ENCODE measurements at regions of chr17 and their contacts with region 1.

Region 1: DNA sequence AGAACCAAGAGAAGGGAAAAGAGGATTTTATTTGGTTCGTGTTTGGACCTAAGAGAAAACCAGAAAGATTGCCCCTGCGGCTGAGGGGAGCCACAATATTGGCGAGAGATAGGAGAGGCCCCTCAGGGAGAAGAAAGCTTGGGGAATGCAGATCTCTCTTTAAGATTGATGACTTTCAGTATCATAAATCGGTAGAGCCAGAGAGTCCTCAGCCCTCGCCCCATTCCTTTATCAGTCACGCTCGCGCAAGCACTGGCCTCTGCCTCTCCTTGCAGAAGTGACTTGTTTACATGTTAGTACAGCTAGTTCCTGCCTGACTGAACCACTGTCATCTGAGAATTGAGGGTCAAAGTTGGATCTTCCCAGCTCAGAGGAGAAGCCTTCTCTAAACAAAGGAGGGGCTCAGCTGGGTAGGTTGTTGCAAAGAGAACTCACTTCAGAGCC is 21.5 kb upstream of the KRT19 start:
- DNase-seq: no peak
- H3K4me3 ChIP-seq: no peak overlapping the region
- CTCF ChIP-seq: no peak

Region 2: DNA sequence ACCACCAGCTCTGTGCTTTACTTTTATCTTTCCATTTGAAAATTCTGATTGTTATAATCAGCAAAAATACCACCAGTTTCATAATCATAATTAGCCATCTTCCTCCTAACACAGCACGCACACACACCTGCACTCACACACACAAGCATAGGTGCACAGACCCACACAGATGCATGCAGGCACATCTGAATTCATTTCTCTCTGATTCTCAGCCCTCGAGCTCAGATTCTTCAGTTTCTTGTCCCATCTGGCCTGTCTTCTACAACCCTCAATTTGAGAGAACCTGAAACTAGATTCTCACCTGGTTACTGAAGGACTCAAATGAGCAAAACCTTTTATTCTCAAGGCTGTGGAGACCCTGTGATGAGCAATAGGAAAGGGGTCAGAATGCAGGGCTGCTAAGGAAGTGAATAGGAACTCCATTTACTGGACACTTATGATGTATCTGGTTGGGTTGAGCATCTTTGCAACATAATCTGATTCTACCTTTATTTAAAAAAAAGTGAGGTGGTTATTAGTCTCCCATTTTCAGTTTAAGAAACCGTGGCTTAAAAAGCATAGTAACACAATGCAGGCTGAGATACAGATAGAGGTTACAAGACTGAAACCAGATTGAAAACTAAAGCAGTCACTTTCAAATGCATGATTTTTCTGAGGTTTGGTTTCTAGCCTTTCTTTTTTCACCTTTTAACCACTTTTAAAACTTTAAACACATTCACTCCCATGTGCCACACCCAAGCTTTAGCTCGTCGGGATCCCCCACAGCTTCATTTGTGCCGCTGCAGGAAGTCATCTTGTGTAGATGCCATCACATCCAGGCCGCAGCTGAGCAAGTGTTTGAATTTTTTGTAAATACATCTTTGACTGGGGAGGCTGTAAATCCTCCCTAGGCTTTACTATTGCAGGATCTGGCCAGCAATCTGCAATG is 208.4 kb before region 1 on chr17:
- in situ Hi-C with region 1: loop called (anchors 10 kb)
- DNase-seq: no peak
- H3K4me3 ChIP-seq: no peak overlapping the region
- CTCF ChIP-seq: no peak

Region 3: GRCh38 chr17:41635121-41636097 is 85.8 kb after region 1 on chr17:
- in situ Hi-C with region 1: loop called (anchors 5 kb)
- DNase-seq: no peak
- H3K4me3 ChIP-seq: no peak overlapping the region
- CTCF ChIP-seq: no peak

Measured in astrocyte of the cerebellum (primary cell).